AG04450 (cell line): ENCODE measurements at regions of chr1 and their contacts with region 1.

Region 1: GRCh38 chr1:25695090-25695770 is 78.6 kb downstream of the MAN1C1 start:
- DNase-seq: peak; percentile 97
- H3K4me3 ChIP-seq: no peak overlapping the region
- H3K27ac ChIP-seq: peak overlapping the region; percentile 99
- H3K27me3 ChIP-seq: no peaks in the 10 kb centered on the region
- CTCF ChIP-seq: peak; percentile 47

Region 2: DNA sequence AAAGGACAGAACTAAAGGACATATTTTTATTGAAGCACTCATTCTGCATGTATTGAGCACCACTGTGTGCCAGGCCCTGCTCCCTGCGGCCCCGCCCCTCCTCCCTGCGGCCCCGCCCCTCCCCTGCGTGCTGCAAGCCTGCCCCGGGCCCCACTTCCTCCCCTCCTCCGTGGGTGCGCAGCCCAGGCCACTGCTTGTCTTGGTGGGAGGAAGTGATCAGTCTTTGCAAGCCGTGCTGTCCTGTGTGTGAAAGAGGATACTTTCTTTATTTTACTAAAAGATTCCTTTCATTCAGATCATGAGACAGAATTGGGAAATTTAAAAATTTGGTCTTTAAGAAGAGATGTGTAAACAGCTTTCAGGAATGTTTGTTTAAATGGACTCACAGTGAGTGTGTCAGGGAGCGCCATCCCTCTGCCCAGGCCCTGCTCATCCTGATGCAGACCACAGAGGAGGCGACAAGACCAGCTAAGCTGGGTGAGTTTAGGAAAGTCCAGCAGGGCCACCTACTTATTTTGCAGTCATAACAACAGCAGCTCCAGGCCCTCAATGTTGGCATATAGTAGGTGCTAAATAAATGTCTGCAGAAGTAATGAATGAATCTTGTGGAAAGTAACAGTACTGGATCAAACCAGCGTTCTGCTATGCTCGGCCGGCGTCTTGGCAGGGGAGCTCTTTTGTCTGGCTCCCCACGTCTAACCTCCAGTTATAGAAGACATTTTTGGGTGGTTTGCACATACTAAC is 16.5 kb after region 1 on chr1:
- CTCF ChIA-PET with region 1: interaction called, 4 read pairs
- POLR2A ChIA-PET with region 1: interaction called, 29 read pairs
- DNase-seq: peak; percentile 67
- H3K4me3 ChIP-seq: no peak overlapping the region
- H3K27ac ChIP-seq: peak overlapping the region; percentile 79
- H3K27me3 ChIP-seq: no peaks in the 10 kb centered on the region
- CTCF ChIP-seq: no peak

Region 3: GRCh38 chr1:26218906-26219494 is 523.8 kb after region 1 on chr1:
- CTCF ChIA-PET with region 1: no interaction called
- POLR2A ChIA-PET with region 1: no interaction called
- DNase-seq: no peak
- H3K4me3 ChIP-seq: no peak overlapping the region
- H3K27ac ChIP-seq: no peak overlapping the region
- H3K27me3 ChIP-seq: peaks cover 15% of the 10 kb centered on the region
- CTCF ChIP-seq: no peak